GM12878 (cell line): ENCODE measurements at regions of chr6 and their contacts with region 1.

Region 1: DNA sequence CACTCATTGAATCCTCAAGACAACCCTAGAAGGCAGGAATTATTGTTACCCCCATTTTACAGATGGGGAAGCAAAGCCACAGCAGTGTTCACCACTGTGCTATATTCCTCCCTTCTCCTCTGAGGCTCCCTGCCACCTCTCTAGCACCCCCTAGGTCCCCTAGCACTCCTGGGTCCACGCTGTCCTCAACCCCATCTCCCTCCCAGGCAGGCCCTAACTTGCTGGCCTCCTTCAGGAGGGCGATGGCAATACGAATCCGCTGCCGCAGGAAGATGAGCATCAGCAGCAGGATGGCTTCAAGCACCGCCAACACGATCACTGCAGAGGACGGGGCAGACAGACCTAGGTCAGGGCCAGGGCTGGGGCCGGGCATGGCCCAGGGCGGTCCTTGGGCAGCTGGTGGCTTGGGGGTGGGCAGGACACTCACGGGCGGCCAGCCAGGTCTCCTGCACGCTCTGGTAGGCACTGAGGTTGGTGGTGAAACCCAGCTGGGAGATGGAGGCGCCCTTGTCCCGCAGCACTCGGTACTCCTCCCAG is 7.8 kb upstream of the NEU1 start:
- DNase-seq: no peak
- ATAC-seq: peak; percentile 42; the same call in 1 of the 3 replicates
- H3K4me3 ChIP-seq: no peak overlapping the region
- H3K27ac ChIP-seq: no peak overlapping the region
- H3K4me1 ChIP-seq: no peaks in the 10 kb centered on the region
- H3K27me3 ChIP-seq: no peaks in the 10 kb centered on the region
- CTCF ChIP-seq: peak in 2 of 3 experiments; percentile 6 to 22; a peak in 2 of 6 replicates
- EP300 ChIP-seq: no peak
- POLR2A ChIP-seq: no peak
- RAD21 ChIP-seq: no peak

Region 2: GRCh38 chr6:31702819-31703522 is 167.5 kb before region 1 on chr6 and contains the start of gene ABHD16A:
- CTCF ChIA-PET with region 1: no interaction called
- POLR2A ChIA-PET with region 1: interaction called, 11 read pairs
- RAD21 ChIA-PET with region 1: no interaction called
- SMC1A ChIA-PET with region 1: no interaction called
- in situ Hi-C with region 1: no loop called
- intact Hi-C with region 1: no loop called
- DNase-seq: peak; percentile 95
- ATAC-seq: peak; percentile 96
- H3K4me3 ChIP-seq: peak within 1 kb of the TSS; percentile 96
- H3K27ac ChIP-seq: peak within 1 kb of the TSS; percentile 91
- H3K4me1 ChIP-seq: peaks cover 9% of the 10 kb centered on the region; the same call in 1 of the 2 replicates
- H3K27me3 ChIP-seq: no peaks in the 10 kb centered on the region
- CTCF ChIP-seq: 0 out of 6 replicates have a peak, but pooled peaks of 1 of the 3 experiments have one; percentile 11
- EP300 ChIP-seq: no peak
- POLR2A ChIP-seq: peak; percentile 88
- RAD21 ChIP-seq: no peak
- polyA plus RNA-seq, gene ABHD16A: 7.5 to 14.5 TPM

Region 3: DNA sequence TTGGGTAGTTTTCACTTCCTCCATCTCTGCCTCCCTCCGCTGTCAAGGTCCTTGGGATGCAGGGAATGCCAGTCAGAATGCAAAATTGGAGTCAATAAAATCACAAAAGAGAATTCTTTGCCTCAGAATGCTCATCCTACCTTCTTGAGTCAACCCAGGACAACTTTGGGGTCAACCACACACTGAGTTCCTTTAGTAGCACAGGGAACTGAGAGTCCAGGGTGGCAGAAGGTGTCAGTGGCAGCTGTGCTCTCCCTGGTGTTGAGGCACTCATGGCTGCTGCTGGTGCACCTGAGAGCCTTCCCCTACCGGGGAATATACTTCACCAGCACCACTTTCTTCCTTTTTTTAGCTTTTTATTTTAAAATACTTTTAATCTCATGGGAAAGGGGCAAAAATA is 354.2 kb after region 1 on chr6:
- CTCF ChIA-PET with region 1: no interaction called
- POLR2A ChIA-PET with region 1: no interaction called
- RAD21 ChIA-PET with region 1: no interaction called
- SMC1A ChIA-PET with region 1: no interaction called
- in situ Hi-C with region 1: no loop called
- intact Hi-C with region 1: no loop called
- DNase-seq: no peak
- ATAC-seq: peak; percentile 95
- H3K4me3 ChIP-seq: no peak overlapping the region
- H3K27ac ChIP-seq: no peak overlapping the region
- H3K4me1 ChIP-seq: peaks cover 37% of the 10 kb centered on the region
- H3K27me3 ChIP-seq: peaks cover 0 to 2% of the 10 kb centered on the region in 2 experiments; a peak in 1 of 4 replicates
- CTCF ChIP-seq: no peak
- EP300 ChIP-seq: peak in 1 of 2 experiments; percentile 85; a peak in 2 of 4 replicates
- POLR2A ChIP-seq: no peak
- RAD21 ChIP-seq: no peak

Region 4: DNA sequence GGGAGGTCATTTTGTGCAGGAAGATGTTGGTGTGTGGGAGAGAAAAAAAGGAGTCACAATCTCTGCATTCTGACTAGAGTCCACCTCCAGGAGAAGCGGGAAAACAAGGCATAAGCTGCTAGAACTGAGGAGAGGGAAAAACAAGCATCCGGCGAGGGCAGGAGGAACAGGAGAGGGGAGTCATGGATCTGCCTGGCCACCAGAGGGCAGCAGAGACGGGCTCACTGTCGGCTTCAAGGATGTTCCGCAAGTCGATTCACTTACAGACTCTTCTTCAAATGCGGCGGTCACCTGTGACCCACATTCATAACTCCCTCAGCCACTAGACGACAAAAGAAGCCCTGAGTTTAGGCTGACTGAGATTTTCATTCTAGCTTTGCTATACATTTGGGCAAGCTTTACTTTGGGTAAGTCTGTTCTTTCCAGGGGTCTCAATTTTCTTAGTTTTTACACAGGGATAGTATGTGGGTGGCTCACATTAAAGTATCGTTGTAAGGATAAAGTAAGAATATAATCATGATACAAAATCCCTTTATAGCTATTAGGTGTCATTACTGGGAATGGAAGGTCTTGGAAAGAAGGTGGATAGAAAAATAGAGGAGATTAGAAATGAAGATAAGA is 543.1 kb after region 1 on chr6:
- CTCF ChIA-PET with region 1: no interaction called
- POLR2A ChIA-PET with region 1: no interaction called
- RAD21 ChIA-PET with region 1: no interaction called
- SMC1A ChIA-PET with region 1: no interaction called
- in situ Hi-C with region 1: no loop called
- intact Hi-C with region 1: no loop called
- DNase-seq: peak; percentile 40
- ATAC-seq: peak; percentile 94
- H3K4me3 ChIP-seq: no peak overlapping the region
- H3K27ac ChIP-seq: no peak overlapping the region
- H3K4me1 ChIP-seq: no peaks in the 10 kb centered on the region
- H3K27me3 ChIP-seq: no peaks in the 10 kb centered on the region; a peak in 2 of 4 replicates
- CTCF ChIP-seq: peak; percentile 84 to 96 (median 94)
- EP300 ChIP-seq: no peak
- POLR2A ChIP-seq: no peak
- RAD21 ChIP-seq: peak; percentile 83